ENCODE measurements at regions of chr16 and their contacts with region 1.

Region 1: GRCh38 chr16:9090960-9091866 is at the start of gene HAPSTR1:
- DNase-seq: peak; percentile 95
- ATAC-seq: peak; percentile 84
- H3K4me3 Mint-ChIP-seq: peak within 1 kb of the TSS; percentile 99
- H3K27ac Mint-ChIP-seq: peak within 1 kb of the TSS; percentile 98
- H3K4me1 Mint-ChIP-seq: peaks cover 51% of the 10 kb centered on the region
- H3K27me3 Mint-ChIP-seq: no peaks in the 10 kb centered on the region
- CTCF ChIP-seq: no peak
- total RNA-seq, gene HAPSTR1: 77.0 and 85.6 TPM in 2 replicates

Region 2: DNA sequence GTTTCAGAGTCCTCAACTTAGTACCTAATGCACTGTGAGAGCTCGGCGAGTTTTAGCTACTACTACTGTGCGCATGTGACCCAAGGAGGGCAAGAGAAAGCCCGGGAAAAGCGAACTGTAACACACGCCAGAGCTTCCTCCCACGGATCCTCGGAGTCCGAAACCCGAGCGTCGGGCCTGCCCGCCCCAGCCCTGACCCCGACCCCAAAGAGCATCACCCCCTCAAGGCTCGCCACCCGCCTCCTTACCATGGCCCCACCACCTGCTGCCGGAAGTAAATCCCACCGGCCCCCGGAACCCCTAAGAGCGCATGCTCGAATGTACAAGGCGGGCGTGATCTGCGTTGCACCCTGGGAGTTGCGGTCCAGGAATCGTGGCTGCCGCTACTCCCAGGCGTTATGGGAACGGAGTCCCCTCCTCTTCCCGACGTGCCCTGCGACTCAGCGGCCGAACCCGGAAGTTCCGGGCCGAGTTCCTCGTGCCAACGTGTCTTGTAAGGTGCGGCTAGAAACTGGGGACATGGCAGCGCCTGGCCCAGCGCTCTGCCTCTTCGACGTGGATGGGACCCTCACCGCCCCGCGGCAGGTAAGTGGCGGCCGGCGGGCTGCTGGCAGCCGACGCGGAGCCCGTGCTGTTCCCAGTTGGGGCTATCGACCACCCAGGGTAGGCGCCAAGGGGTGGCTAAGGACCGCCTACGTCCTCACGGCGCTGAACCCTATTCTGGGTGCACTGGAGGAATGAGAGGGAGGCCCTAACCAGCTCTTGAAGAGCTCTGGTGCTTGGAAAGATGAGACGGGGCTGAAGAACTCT is 293.6 kb before region 1 on chr16 and contains the starts of genes PMM2 and TMEM186:
- CTCF ChIA-PET with region 1: no interaction called
- POLR2A ChIA-PET with region 1: interaction called, 6 read pairs
- intact Hi-C with region 1: loop called (anchors 1 kb)
- DNase-seq: peak; percentile 91
- ATAC-seq: peak; percentile 96
- H3K4me3 Mint-ChIP-seq: peak within 1 kb of the TSS; percentile 98
- H3K27ac Mint-ChIP-seq: peak within 1 kb of the TSS; percentile 87
- H3K4me1 Mint-ChIP-seq: peaks cover 36% of the 10 kb centered on the region
- H3K27me3 Mint-ChIP-seq: no peaks in the 10 kb centered on the region
- CTCF ChIP-seq: no peak
- total RNA-seq, gene PMM2: 57.4 and 61.1 TPM in 2 replicates
- total RNA-seq, gene TMEM186: 10.6 and 13.0 TPM in 2 replicates

Region 3: DNA sequence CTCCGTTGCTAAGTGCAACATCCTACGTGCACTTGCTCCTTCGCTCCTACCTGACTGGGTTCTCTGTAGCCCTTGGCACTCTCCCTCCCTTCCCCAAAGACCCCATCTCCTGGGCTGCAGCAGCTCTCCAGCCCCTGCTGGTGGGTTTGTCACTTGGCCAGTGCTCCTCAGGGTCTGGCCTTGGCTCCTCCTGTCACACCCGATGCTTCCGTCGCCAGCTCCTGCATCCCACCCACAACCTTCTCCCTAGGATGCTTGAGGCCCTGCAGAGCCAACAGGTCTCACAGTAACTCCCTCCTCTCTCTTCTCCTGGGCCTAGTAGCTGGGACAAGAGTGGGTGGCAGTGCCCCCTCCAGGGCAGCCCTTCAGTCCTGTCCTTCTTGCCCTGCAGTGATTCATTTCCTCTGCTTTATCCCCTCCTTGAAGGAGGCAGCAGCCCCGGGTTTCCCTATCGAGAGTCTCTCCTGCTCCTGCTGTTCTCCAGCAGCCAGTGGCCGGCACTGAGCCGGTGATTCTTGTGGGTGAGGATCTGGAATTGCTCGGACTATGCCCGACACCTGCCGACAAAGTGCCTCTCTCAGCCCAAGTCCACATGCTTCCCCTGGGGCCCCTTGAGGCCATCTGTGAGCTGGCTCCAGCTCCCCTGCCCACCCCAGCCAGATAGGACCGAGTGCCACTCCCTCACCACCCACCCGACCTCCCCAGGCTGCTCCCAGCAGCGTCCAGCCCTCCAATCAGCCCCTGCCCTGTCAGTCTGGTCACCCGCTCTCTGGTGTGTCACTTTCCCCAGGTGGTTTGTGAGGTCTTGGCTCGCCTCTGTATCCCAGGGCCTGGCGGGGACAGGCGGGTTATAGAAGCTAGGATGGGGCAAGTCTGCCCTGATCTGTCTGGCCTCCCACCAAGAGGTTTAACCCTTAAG is 205.3 kb before region 1 on chr16:
- CTCF ChIA-PET with region 1: interaction called, 7 read pairs
- POLR2A ChIA-PET with region 1: interaction called, 39 read pairs
- intact Hi-C with region 1: loop called (anchors 1 kb)
- DNase-seq: no peak
- ATAC-seq: peak; percentile 22
- H3K4me3 Mint-ChIP-seq: no peak overlapping the region
- H3K27ac Mint-ChIP-seq: peak overlapping the region; percentile 19
- H3K4me1 Mint-ChIP-seq: peaks cover 24% of the 10 kb centered on the region
- H3K27me3 Mint-ChIP-seq: peaks cover 10% of the 10 kb centered on the region
- CTCF ChIP-seq: no peak

Region 4: DNA sequence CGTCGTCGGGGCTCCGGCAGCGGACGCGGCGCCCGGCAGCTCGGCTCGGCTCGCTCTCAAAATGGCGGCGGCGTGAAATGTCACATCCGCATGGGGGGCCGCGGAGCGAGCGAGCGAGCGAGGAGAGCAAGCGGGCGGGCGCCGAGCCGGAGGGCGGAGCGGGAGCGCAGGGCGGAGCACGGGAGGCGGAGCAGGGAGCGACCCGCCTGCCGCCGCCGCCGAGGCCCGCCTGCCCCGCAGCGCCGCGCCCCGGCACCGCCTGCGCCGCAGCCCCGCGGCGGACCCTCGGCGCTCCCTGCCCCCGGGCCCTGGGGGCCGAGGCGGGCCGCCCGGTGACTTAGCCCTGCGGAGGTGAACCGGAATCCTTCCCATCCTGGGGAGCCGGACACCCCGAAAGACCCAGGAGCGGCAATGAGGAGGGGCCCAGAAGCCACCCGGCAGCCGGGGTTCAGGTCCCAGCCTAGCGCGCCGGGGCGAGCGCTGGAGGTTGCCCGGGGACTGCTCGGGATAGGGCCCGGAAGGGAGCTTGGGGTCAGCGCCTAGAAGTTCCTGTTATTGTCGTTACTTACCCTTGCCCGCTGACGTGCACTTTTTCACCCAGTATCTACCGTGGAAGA is 127.3 kb before region 1 on chr16 and contains the start of gene USP7:
- CTCF ChIA-PET with region 1: no interaction called
- POLR2A ChIA-PET with region 1: interaction called, 29 read pairs
- intact Hi-C with region 1: loop called (anchors 1 kb)
- DNase-seq: peak; percentile 90
- ATAC-seq: peak; percentile 90
- H3K4me3 Mint-ChIP-seq: peak within 1 kb of the TSS; percentile 81
- H3K27ac Mint-ChIP-seq: peak within 1 kb of the TSS; percentile 93
- H3K4me1 Mint-ChIP-seq: peaks cover 35% of the 10 kb centered on the region
- H3K27me3 Mint-ChIP-seq: no peaks in the 10 kb centered on the region
- CTCF ChIP-seq: no peak
- total RNA-seq, gene USP7: 173 and 193 TPM in 2 replicates

Region 5: GRCh38 chr16:9053006-9053601 is 38.1 kb before region 1 on chr16:
- CTCF ChIA-PET with region 1: no interaction called
- POLR2A ChIA-PET with region 1: interaction called, 6 read pairs
- intact Hi-C with region 1: loop called (anchors 2 kb)
- DNase-seq: no peak
- ATAC-seq: no peak
- H3K4me3 Mint-ChIP-seq: no peak overlapping the region
- H3K27ac Mint-ChIP-seq: no peak overlapping the region
- H3K4me1 Mint-ChIP-seq: no peaks in the 10 kb centered on the region
- H3K27me3 Mint-ChIP-seq: peaks cover 7% of the 10 kb centered on the region
- CTCF ChIP-seq: no peak

Region 6: GRCh38 chr16:9079430-9079812 is 11.8 kb before region 1 on chr16:
- CTCF ChIA-PET with region 1: interaction called, 4 read pairs
- POLR2A ChIA-PET with region 1: interaction called, 145 read pairs
- intact Hi-C with region 1: loop called (anchors 1 kb)
- DNase-seq: no peak
- ATAC-seq: no peak
- H3K4me3 Mint-ChIP-seq: no peak overlapping the region
- H3K27ac Mint-ChIP-seq: peak overlapping the region; percentile 70
- H3K4me1 Mint-ChIP-seq: peaks cover 26% of the 10 kb centered on the region
- H3K27me3 Mint-ChIP-seq: no peaks in the 10 kb centered on the region
- CTCF ChIP-seq: no peak

Region 7: DNA sequence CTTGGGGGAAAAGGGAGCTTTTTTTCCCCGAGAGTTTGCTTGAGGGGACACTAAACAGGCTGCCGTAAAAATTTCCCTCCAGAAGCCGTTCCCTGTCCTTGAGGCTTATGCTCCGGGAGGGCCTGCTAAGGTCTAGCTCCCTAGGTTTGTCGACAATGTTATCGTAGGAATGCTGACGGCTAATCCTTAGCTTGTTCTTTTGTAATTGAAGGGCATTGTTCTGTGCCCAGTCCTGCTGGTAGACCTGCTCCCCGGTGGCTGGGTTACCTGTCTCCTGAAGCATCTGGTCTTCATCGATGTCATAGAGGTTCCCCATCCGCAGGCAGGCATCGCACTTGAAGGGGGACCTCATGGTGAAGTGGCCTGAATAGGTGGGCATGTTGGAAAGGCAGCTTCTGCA is 672.3 kb after region 1 on chr16:
- CTCF ChIA-PET with region 1: no interaction called
- POLR2A ChIA-PET with region 1: no interaction called
- intact Hi-C with region 1: no loop called
- DNase-seq: no peak
- ATAC-seq: no peak
- H3K4me3 Mint-ChIP-seq: no peak overlapping the region
- H3K27ac Mint-ChIP-seq: no peak overlapping the region
- H3K4me1 Mint-ChIP-seq: no peaks in the 10 kb centered on the region
- H3K27me3 Mint-ChIP-seq: peaks cover 2% of the 10 kb centered on the region
- CTCF ChIP-seq: no peak

Region 8: GRCh38 chr16:10737068-10737625 is 1645.9 kb after region 1 on chr16:
- CTCF ChIA-PET with region 1: no interaction called
- POLR2A ChIA-PET with region 1: no interaction called
- intact Hi-C with region 1: loop called (anchors 5 kb)
- DNase-seq: no peak
- ATAC-seq: peak; percentile 65
- H3K4me3 Mint-ChIP-seq: peak overlapping the region; percentile 68
- H3K27ac Mint-ChIP-seq: peak overlapping the region; percentile 90
- H3K4me1 Mint-ChIP-seq: peaks cover 51% of the 10 kb centered on the region
- H3K27me3 Mint-ChIP-seq: no peaks in the 10 kb centered on the region
- CTCF ChIP-seq: peak; percentile 60